Ascending aorta (tissue), 2 donors: ENCODE measurements at regions of chr1 and their contacts with region 1.

Region 1: DNA sequence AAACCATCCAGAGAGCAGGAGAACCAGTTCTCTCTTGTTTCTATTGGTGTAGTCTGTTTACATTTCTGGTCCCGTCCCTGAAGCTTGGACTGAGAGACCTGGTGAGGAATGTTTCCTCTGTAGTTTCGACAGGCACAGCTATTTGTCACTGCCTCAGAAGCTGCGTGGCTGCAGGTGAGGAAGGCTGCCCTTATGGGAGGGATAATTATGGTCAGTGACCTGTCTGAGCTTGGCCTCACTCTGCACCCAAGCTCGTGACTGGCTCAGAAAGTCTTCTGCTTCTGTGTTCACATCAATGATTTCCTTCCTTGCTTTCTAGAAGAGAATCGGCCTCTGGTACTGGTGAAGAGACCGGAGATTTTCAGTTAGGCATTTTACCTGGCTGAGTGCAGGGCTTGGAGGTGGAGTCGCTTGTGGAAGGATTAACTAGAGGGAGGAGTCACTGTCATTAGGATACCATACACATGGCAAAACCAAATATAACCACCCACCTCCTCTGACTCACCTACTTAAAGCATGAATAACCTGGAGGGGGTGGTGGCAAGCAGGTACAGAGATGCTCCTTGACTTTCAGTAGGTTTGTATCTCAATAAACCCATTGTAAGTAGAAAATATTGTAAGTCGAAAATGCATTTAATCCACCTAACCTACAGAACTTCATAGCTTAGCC is 19.9 kb upstream of the WDR26 start:
- DNase-seq: no peak
- H3K4me3 ChIP-seq: no peak overlapping the region
- H3K27ac ChIP-seq: no peak overlapping the region
- H3K4me1 ChIP-seq: peaks cover 5 to 9% of the 10 kb centered on the region in 2 donors
- H3K27me3 ChIP-seq: no peaks in the 10 kb centered on the region
- CTCF ChIP-seq: no peak

Region 2: GRCh38 chr1:224113918-224114786 is 340.4 kb before region 1 on chr1 and contains the start of gene FBXO28:
- intact Hi-C with region 1: loop called (anchors 5 kb)
- DNase-seq: peak; percentile 87 to 97
- H3K4me3 ChIP-seq: peak within 1 kb of the TSS; percentile 85
- H3K27ac ChIP-seq: peak within 1 kb of the TSS; percentile 92 to 96
- H3K4me1 ChIP-seq: peaks cover 5 to 14% of the 10 kb centered on the region in 2 donors
- H3K27me3 ChIP-seq: no peaks in the 10 kb centered on the region
- CTCF ChIP-seq: no peak
- total RNA-seq, gene FBXO28: 4.8 TPM

Region 3: DNA sequence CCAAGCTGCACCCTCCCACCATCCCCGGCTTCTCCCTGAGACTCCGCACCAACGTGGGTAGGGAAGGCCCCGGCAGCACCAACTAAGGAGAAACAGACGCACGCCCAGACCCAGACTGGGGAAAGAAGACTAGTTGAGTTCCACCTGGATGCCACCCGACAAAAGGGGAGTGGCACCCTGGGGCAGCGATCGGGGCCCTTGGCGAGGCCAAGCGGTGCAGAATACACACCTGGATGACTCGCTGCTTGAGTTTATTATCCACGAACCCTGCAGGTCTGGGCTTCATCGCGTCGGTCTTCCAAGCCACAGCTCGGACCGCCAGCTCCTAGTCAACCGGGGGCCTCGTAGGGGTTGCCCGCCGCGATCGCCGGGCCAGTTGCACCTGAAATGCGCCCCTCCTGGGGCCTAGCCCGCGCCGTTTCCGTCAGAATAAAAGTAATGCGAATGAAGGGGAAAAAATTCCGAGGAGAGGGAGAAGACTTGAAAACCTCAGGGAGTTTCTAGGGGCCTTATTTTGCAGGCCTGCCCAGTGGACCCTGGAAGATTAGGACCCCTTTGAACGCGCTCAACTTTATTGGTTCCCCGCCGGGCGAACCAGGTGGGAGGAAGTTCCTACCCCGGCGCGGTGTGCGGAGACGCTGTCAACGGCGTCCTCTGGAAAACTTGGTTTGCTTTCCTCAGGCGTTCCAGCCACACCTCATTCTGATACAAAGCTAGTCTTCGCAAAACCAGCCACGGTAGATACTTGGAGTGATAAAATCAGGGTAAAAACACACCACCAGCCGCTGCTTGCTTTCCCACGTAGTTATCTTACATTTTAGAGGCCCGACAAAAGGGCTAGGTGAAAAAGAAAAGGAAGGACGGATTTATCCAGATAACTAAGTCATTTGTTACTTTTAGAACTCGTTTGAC is 124.4 kb before region 1 on chr1 and contains the start of gene NVL:
- intact Hi-C with region 1: loop called (anchors 5 kb)
- DNase-seq: peak; percentile 12 to 86
- H3K4me3 ChIP-seq: peak within 1 kb of the TSS; percentile 79 to 83
- H3K27ac ChIP-seq: peak within 1 kb of the TSS; percentile 83 to 91
- H3K4me1 ChIP-seq: peaks cover 0 to 18% of the 10 kb centered on the region in 2 donors
- H3K27me3 ChIP-seq: no peaks in the 10 kb centered on the region
- CTCF ChIP-seq: no peak
- total RNA-seq, gene NVL: 34.6 TPM

Region 4: GRCh38 chr1:224356685-224357625 is 97.6 kb before region 1 on chr1 and contains the start of gene CNIH4:
- intact Hi-C with region 1: loop called (anchors 2 kb)
- DNase-seq: peak; percentile 82 to 96
- H3K4me3 ChIP-seq: peak within 1 kb of the TSS; percentile 59 to 97
- H3K27ac ChIP-seq: peak within 1 kb of the TSS; percentile 90 to 96
- H3K4me1 ChIP-seq: peaks cover 0 to 21% of the 10 kb centered on the region in 2 donors
- H3K27me3 ChIP-seq: no peaks in the 10 kb centered on the region
- CTCF ChIP-seq: no peak
- total RNA-seq, gene CNIH4: 26.9 TPM

Region 5: GRCh38 chr1:224420106-224420505 is 34.4 kb before region 1 on chr1:
- intact Hi-C with region 1: loop called (anchors 5 kb)
- DNase-seq: no peak
- H3K4me3 ChIP-seq: no peak overlapping the region
- H3K27ac ChIP-seq: no peak overlapping the region
- H3K4me1 ChIP-seq: no peaks in the 10 kb centered on the region
- H3K27me3 ChIP-seq: no peaks in the 10 kb centered on the region
- CTCF ChIP-seq: no peak

Region 6: DNA sequence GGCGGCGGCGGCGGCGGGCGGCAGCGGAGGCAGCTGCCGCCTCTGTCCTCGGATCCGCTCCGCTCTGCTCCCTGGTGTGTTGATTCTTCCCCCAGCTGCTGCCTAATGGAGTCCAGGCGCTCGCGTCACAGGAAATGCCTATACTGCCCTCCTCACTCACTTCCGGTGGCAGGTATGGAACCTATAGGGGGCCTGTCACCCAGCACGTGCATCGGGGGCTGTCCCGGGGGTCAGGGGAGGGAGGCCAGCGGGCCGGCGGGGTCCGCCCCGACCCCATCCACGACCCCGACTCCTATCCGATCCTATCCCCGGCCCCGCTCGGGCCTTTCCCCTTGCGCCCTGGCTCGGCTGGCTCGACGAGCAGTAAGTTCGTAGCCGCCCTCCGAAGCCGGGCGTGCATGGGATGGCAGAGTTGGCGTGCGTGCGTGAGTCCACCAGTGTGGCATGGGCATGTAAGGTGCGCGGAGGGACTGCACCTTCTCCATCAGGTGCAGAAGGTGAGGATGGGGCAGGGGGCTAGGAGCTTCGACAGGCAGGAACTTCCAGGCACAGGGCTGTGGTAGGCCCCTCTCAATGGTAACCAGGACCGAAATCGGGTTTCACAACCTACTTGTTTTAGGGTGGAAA is 19.7 kb before region 1 on chr1 and contains the start of gene WDR26:
- intact Hi-C with region 1: loop called (anchors 2 kb)
- DNase-seq: peak; percentile 44 to 91
- H3K4me3 ChIP-seq: peak within 1 kb of the TSS; percentile 73 to 76
- H3K27ac ChIP-seq: peak within 1 kb of the TSS; percentile 99 to 100
- H3K4me1 ChIP-seq: peaks cover 0 to 27% of the 10 kb centered on the region in 2 donors
- H3K27me3 ChIP-seq: no peaks in the 10 kb centered on the region
- CTCF ChIP-seq: no peak
- total RNA-seq, gene WDR26: 31.8 TPM